Tibial artery (tissue), 4 donors: ENCODE measurements at regions of chr7 and their contacts with region 1.

Region 1: GRCh38 chr7:103344453-103345149 is at the start of gene DNAJC2:
- DNase-seq: peak; percentile 87 to 91
- H3K4me3 ChIP-seq: peak within 1 kb of the TSS; percentile 91 to 98
- H3K27ac ChIP-seq: peak within 1 kb of the TSS; percentile 88 to 89
- H3K4me1 ChIP-seq: peaks cover 0 to 43% (median 37%) of the 10 kb centered on the region in 4 donors
- H3K27me3 ChIP-seq: no peaks in the 10 kb centered on the region
- CTCF ChIP-seq: no peak

Region 2: GRCh38 chr7:103074519-103075336 is 269.9 kb before region 1 on chr7 and contains the starts of genes ARMC10 and FBXL13:
- intact Hi-C with region 1: loop called (anchors 5 kb)
- DNase-seq: peak; percentile 90 to 95
- H3K4me3 ChIP-seq: peak within 1 kb of the TSS; percentile 64 to 70
- H3K27ac ChIP-seq: peak within 1 kb of the TSS; percentile 89 to 91
- H3K4me1 ChIP-seq: peaks cover 0 to 24% (median 15%) of the 10 kb centered on the region in 4 donors
- H3K27me3 ChIP-seq: no peaks in the 10 kb centered on the region
- CTCF ChIP-seq: peak; percentile 34 to 38

Region 3: DNA sequence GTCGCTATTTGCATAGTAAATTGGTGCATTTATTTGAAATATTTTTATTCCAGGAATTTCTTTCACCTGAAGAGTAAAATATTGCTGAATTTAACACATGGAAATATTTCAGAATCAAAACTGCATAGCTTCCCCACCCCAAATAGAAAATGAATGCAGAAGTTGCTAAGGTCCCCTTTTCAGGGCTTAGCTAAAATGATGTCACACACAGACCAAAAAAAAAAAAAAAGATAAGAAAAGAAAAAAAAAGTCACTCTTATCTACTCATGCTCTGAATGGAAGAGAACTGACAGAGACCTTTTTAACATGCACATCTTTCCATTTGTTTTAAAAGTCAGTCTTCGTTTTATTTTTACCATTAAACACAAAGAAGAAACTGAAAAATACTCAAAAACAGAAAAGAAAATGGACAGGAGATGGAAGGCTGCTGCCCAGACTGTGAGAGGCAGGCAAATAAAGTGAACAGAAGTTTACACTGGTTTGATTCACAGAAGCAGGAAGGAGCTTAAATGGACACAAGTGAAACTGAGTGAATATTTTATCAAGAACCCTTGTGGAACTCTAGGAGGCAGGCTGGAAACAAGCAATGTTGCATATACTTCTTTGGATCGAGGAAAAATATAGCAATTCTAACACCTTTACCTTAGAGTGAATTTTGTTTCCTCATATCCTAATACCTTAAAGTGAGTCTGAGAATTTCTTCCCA is 34.8 kb after region 1 on chr7:
- intact Hi-C with region 1: no loop called
- DNase-seq: no peak
- H3K4me3 ChIP-seq: no peak overlapping the region
- H3K27ac ChIP-seq: no peak overlapping the region
- H3K4me1 ChIP-seq: no peaks in the 10 kb centered on the region
- H3K27me3 ChIP-seq: no peaks in the 10 kb centered on the region
- CTCF ChIP-seq: no peak